ENCODE measurements at regions of chr13 and their contacts with region 1.

Region 1: DNA sequence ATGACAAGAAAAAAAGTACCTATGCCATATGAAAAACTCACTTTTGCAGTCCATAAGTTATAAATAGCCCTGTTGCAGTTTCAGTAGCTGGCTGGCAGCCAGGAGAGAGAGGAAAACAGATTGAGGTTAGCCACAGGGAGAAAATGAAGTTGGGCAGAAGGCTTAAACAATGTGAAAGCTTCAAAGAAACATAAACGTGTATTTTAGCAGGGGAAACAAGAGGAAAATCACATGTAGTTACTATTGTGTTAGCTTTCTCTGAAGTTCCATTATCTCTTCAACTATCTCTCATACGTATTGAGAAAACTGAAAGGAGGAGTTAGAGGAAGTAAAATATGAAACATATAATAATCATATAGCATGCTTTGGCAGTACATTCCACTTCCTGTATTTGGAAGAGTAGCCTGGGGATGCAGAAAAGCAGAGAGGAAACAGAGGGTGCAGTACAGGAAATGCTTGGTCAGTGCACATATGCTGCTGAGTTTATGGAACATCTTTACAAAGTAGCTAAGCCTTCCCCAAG is 1551.1 kb downstream of the EFNB2 start:
- DNase-seq: peak; percentile 7
- CTCF ChIP-seq: no peak

Region 2: DNA sequence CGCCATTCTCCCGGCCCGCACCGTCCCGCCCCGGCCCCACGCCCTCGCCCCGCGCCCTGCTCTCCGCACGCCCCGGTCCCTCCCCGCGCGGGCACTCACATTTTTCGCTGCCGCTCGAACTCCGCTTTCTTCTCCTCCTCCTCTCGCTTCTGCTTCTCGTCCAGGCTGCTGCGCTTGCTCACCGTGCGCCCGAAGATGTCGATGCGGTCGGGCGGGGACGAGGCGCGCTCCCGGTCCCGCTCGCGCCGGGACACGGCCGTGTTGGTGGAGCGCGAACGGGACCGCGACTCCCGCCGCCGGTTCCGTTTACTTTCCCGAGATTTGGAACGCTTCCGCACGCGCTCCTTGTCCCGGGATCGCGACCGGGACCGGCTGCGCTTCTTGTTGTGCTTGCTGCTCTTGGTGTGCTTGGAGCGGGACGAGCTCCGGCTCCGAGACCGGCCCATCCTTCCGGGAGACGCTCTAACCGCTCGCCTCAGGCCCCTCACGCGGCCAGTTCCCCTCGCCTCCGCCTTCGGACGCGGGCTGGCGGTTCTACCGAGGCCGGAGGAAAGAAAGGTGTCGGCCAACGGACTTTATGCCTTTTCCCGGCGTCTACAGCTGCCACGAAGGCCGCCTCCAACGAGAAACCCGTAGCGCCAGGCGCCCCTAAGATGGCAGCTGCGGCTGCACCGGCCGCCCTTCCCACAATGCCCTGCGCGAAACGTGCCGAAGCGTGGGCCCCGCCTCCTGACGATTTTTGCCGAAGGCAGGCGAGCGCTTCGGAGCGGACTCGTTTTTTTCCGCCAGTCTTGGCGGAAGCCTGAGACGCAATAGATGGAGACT is 1583.3 kb after region 1 on chr13 and contains the start of gene ARGLU1:
- in situ Hi-C with region 1: loop called (anchors 25 kb)
- DNase-seq: peak; percentile 94
- CTCF ChIP-seq: no peak